CD8-positive, alpha-beta T cell (primary cell): ENCODE measurements at regions of chr4 and their contacts with region 1.

Region 1: DNA sequence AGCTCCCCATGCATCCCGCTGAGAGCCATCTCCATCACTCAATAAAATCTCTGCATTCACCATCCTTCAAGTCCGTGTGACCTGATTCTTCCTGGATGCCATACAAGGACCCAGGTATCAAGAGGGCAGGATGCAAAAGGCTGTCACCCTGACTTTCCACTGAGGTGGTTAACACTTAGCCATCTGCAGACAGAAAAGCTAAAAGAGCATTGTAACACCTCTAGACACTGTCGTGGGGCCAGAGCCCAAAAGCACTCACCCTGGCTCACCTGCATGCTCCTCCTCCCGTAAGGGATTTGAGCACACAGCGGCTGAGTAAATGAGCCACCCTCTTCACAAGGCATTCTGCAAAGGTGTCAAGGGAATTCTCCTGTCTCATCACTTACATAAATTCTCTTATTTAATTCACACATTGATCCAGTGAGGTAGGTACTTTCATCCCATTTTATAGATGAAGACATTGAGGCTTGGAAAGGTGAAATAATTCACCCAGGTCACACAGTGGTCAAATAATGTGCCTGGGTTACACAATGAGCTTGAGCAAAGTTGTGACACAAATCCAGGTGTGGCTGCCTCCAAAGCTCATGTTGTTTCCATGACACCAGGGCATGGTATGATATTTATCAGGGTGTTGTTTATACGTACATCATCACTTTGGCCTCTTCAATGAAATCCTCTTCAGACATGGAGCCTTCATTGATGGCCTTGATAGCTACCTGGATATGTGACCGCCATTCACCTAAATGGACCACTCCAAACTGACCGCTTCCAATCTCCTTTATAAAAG is 48.0 kb downstream of the TXK start:
- DNase-seq: peak in 1 of 9 experiments; percentile 10
- ATAC-seq: no peak
- H3K4me3 ChIP-seq: no peak overlapping the region
- H3K4me3 Mint-ChIP-seq: no peak overlapping the region
- H3K27ac ChIP-seq: no peak overlapping the region
- H3K27ac Mint-ChIP-seq: peak overlapping the region; percentile 10
- H3K4me1 ChIP-seq: no peaks in the 10 kb centered on the region
- H3K4me1 Mint-ChIP-seq: peaks cover 14% of the 10 kb centered on the region
- H3K27me3 ChIP-seq: no peaks in the 10 kb centered on the region
- H3K27me3 Mint-ChIP-seq: no peaks in the 10 kb centered on the region
- CTCF ChIP-seq: no peak

Region 2: GRCh38 chr4:47686294-47686872 is 399.6 kb before region 1 on chr4:
- CTCF ChIA-PET with region 1: no interaction called
- POLR2A ChIA-PET with region 1: no interaction called
- intact Hi-C with region 1: loop called (anchors 5 kb)
- DNase-seq: peak; percentile 22 to 71 (median 58)
- ATAC-seq: peak; percentile 71
- H3K4me3 ChIP-seq: no peak overlapping the region
- H3K4me3 Mint-ChIP-seq: no peak overlapping the region
- H3K27ac ChIP-seq: no peak overlapping the region
- H3K27ac Mint-ChIP-seq: no peak overlapping the region
- H3K4me1 ChIP-seq: no peaks in the 10 kb centered on the region
- H3K4me1 Mint-ChIP-seq: no peaks in the 10 kb centered on the region
- H3K27me3 ChIP-seq: peaks cover 0 to 4% of the 10 kb centered on the region in 2 experiments
- H3K27me3 Mint-ChIP-seq: peaks cover 8% of the 10 kb centered on the region
- CTCF ChIP-seq: peak; percentile 71

Region 3: GRCh38 chr4:47926639-47927258 is 159.3 kb before region 1 on chr4:
- CTCF ChIA-PET with region 1: interaction called, 8 read pairs
- POLR2A ChIA-PET with region 1: no interaction called
- intact Hi-C with region 1: loop called (anchors 2 kb)
- DNase-seq: peak; percentile 21 to 70 (median 51)
- ATAC-seq: peak; percentile 97
- H3K4me3 ChIP-seq: no peak overlapping the region
- H3K4me3 Mint-ChIP-seq: peak overlapping the region; percentile 44
- H3K27ac ChIP-seq: no peak overlapping the region
- H3K27ac Mint-ChIP-seq: no peak overlapping the region
- H3K4me1 ChIP-seq: peaks cover 6% of the 10 kb centered on the region
- H3K4me1 Mint-ChIP-seq: peaks cover 8% of the 10 kb centered on the region
- H3K27me3 ChIP-seq: no peaks in the 10 kb centered on the region
- H3K27me3 Mint-ChIP-seq: peaks cover 24% of the 10 kb centered on the region
- CTCF ChIP-seq: peak; percentile 61

Region 4: GRCh38 chr4:48002267-48002666 is 83.7 kb before region 1 on chr4:
- CTCF ChIA-PET with region 1: interaction called, 6 read pairs
- POLR2A ChIA-PET with region 1: no interaction called
- intact Hi-C with region 1: loop called in 1 of 2 experiments (anchors 2 kb)
- DNase-seq: no peak
- ATAC-seq: no peak
- H3K4me3 ChIP-seq: no peak overlapping the region
- H3K4me3 Mint-ChIP-seq: no peak overlapping the region
- H3K27ac ChIP-seq: no peak overlapping the region
- H3K27ac Mint-ChIP-seq: no peak overlapping the region
- H3K4me1 ChIP-seq: no peaks in the 10 kb centered on the region
- H3K4me1 Mint-ChIP-seq: no peaks in the 10 kb centered on the region
- H3K27me3 ChIP-seq: no peaks in the 10 kb centered on the region
- H3K27me3 Mint-ChIP-seq: peaks cover 8% of the 10 kb centered on the region
- CTCF ChIP-seq: no peak

Region 5: DNA sequence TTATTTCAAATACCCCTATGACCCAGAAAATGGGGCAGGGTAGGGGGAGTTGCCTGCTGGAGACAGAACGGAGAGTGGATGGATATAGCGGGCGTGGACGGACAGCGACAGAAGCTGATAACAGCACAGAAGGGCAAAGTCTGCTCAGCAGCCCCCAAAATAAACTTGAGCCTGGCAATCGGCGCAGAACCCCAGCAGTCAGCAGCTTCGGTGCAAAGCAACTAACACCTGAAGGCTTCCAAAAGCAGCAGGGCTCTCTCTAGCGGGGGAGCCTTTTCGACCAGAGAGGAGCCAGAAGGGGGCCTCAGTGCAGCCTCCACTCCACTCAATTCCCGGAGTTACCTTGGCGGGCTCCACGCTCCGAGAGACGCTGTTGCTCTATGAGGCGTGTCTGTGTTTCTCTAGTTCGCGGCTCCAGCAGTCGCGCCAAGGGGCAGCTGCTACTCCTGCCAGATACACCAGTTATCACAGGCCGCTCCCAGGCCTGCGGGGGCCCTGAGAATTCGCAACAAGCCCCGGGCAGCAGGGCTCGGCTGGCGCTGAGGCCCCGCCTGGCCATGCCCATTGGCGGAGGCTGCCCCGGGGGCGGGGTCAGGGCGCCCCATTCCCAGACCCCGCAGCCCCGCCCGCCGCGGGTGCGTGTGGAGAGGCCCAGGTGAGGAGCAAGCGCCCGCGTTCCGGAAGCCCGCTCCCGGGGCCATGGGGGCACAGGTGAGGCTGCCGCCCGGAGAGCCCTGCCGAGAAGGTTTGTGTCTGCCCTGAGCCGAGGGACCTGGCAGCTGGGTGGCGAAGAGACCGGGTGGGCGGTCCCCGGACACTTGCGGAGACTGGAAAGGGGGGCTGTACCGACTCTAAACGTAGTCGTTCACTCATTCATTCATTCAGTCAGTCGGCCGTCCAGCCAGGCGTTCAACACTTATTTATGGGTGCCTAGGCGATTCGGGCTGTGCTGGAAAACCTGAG is 69.6 kb before region 1 on chr4 and contains the starts of genes CNGA1 and NIPAL1:
- CTCF ChIA-PET with region 1: interaction called, 8 read pairs
- POLR2A ChIA-PET with region 1: no interaction called
- intact Hi-C with region 1: loop called in 1 of 2 experiments (anchors 1 kb)
- DNase-seq: peak; percentile 23 to 81 (median 69)
- ATAC-seq: peak; percentile 95
- H3K4me3 ChIP-seq: peak within 1 kb of the TSS; percentile 63 to 68
- H3K4me3 Mint-ChIP-seq: peak within 1 kb of the TSS; percentile 87
- H3K27ac ChIP-seq: no peak within 1 kb of the TSS
- H3K27ac Mint-ChIP-seq: peak within 1 kb of the TSS; percentile 3
- H3K4me1 ChIP-seq: peaks cover 12% of the 10 kb centered on the region
- H3K4me1 Mint-ChIP-seq: peaks cover 9% of the 10 kb centered on the region
- H3K27me3 ChIP-seq: no peaks in the 10 kb centered on the region
- H3K27me3 Mint-ChIP-seq: peaks cover 9% of the 10 kb centered on the region
- CTCF ChIP-seq: no peak
- total RNA-seq, gene CNGA1: not detected
- total RNA-seq, gene NIPAL1: 0.64 to 1.3 TPM

Region 6: GRCh38 chr4:48033825-48034413 is 52.1 kb before region 1 on chr4:
- CTCF ChIA-PET with region 1: interaction called, 46 read pairs
- POLR2A ChIA-PET with region 1: no interaction called
- intact Hi-C with region 1: loop called (anchors 1 kb)
- DNase-seq: peak; percentile 36 to 76 (median 66)
- ATAC-seq: peak; percentile 96
- H3K4me3 ChIP-seq: no peak overlapping the region
- H3K4me3 Mint-ChIP-seq: no peak overlapping the region
- H3K27ac ChIP-seq: no peak overlapping the region
- H3K27ac Mint-ChIP-seq: no peak overlapping the region
- H3K4me1 ChIP-seq: no peaks in the 10 kb centered on the region
- H3K4me1 Mint-ChIP-seq: peaks cover 4% of the 10 kb centered on the region
- H3K27me3 ChIP-seq: no peaks in the 10 kb centered on the region
- H3K27me3 Mint-ChIP-seq: no peaks in the 10 kb centered on the region
- CTCF ChIP-seq: peak; percentile 82

Region 7: DNA sequence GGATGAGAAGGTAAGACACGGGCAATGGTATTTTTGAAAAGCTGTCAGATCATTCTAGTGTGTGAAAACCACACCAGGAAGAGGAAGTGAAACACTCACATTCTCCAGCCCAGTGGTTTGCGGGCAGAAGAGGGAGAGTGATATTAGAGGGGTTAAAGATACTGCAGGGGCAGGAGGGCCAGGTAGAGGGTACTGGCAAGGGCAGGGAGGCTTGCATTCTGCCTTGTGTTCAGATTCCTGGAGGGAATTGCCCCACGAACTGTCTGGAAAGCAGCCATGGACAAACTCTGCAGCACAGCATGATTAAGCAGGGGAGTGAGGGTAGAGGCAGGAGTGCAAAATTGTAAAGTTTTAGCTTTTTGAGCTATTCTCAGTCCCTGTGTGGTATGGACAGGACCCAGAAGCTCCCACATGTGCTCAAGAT is 38.6 kb before region 1 on chr4:
- CTCF ChIA-PET with region 1: interaction called, 8 read pairs
- POLR2A ChIA-PET with region 1: no interaction called
- intact Hi-C with region 1: loop called in 1 of 2 experiments (anchors 5 kb)
- DNase-seq: peak in 8 of 9 experiments; percentile 49 to 76 (median 64)
- ATAC-seq: peak; percentile 80
- H3K4me3 ChIP-seq: peak overlapping the region in 1 of 2 experiments; percentile 12
- H3K4me3 Mint-ChIP-seq: peak overlapping the region; percentile 53
- H3K27ac ChIP-seq: no peak overlapping the region
- H3K27ac Mint-ChIP-seq: no peak overlapping the region
- H3K4me1 ChIP-seq: peaks cover 34% of the 10 kb centered on the region
- H3K4me1 Mint-ChIP-seq: peaks cover 51% of the 10 kb centered on the region
- H3K27me3 ChIP-seq: no peaks in the 10 kb centered on the region
- H3K27me3 Mint-ChIP-seq: no peaks in the 10 kb centered on the region
- CTCF ChIP-seq: no peak